Activated CD4-positive, alpha-beta memory T cell treated with anti-CD3 and anti-CD28 coated beads for 36 hours (primary cell): ENCODE measurements at regions of chr18 and their contacts with region 1.

Region 1: GRCh38 chr18:20971886-20972267 is 139.7 kb downstream of the ROCK1 start:
- DNase-seq: no peak
- H3K4me3 Mint-ChIP-seq: no peak overlapping the region
- H3K27ac Mint-ChIP-seq: no peak overlapping the region
- H3K4me1 Mint-ChIP-seq: no peaks in the 10 kb centered on the region
- H3K27me3 Mint-ChIP-seq: no peaks in the 10 kb centered on the region

Region 2: GRCh38 chr18:21038201-21038600 is 66.3 kb after region 1 on chr18:
- CTCF ChIA-PET with region 1: no interaction called
- POLR2A ChIA-PET with region 1: no interaction called
- intact Hi-C with region 1: no loop called
- DNase-seq: no peak
- H3K4me3 Mint-ChIP-seq: no peak overlapping the region
- H3K27ac Mint-ChIP-seq: no peak overlapping the region
- H3K4me1 Mint-ChIP-seq: peaks cover 1% of the 10 kb centered on the region
- H3K27me3 Mint-ChIP-seq: no peaks in the 10 kb centered on the region

Region 3: DNA sequence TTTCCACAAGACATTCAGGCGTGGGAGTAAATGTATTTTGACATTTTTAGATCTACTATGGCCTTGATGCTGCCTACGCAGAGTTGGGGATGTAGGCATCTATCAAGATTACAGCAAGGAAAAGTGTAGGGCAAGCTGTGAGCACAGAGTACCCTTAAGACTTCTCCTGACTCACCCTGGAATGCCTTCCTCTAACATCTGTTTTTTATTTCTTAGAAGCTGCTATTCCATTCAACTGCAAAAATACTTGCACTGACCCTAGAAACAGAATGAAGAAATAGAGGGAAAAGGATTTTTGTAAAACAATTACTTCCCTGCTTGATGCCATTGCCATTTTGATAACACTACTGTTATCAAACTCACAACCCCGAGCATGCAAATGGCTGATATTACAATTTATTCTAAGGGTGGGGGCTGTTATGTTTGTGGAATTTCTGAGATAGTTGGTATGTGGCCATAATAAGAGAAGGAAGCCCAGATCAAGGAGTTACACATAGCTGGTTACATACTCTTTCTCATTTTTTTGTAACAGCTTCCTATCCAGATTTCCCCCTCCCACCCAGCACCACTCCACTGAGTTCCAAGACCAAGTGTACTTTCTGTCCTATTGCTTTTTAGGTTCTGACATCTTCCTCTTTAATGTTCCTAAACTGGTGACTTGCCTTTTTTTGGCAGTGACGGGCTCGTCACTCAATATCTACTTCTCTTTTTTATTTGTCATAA is 145.7 kb after region 1 on chr18:
- CTCF ChIA-PET with region 1: no interaction called
- POLR2A ChIA-PET with region 1: no interaction called
- intact Hi-C with region 1: no loop called
- DNase-seq: no peak
- H3K4me3 Mint-ChIP-seq: no peak overlapping the region
- H3K27ac Mint-ChIP-seq: no peak overlapping the region
- H3K4me1 Mint-ChIP-seq: peaks cover 9% of the 10 kb centered on the region
- H3K27me3 Mint-ChIP-seq: no peaks in the 10 kb centered on the region

Region 4: GRCh38 chr18:21179590-21180220 is 207.8 kb after region 1 on chr18:
- CTCF ChIA-PET with region 1: interaction called, 9 read pairs
- POLR2A ChIA-PET with region 1: no interaction called
- intact Hi-C with region 1: loop called (anchors 1 kb)
- DNase-seq: peak; percentile 50
- H3K4me3 Mint-ChIP-seq: no peak overlapping the region
- H3K27ac Mint-ChIP-seq: no peak overlapping the region
- H3K4me1 Mint-ChIP-seq: peaks cover 6% of the 10 kb centered on the region
- H3K27me3 Mint-ChIP-seq: no peaks in the 10 kb centered on the region

Region 5: DNA sequence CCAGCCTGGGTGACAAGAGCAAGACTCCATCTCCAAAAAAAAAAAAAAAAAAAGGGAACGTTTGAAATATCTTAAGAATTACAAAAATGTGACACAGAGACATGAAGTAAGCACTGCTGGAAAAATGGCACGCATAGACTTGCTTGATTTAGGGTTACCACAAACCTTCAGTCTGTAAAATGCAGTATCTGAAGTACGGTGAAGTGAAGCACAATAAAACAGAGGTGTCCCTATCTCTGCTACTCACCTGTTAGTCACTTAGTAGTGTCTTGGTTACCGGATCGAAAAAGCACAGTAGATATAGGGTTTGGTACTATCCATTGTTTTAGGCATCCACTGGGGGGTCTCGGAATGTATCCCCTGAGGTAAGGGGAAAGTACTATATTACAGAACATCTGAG is 258.6 kb after region 1 on chr18:
- CTCF ChIA-PET with region 1: no interaction called
- POLR2A ChIA-PET with region 1: no interaction called
- intact Hi-C with region 1: no loop called
- DNase-seq: no peak
- H3K4me3 Mint-ChIP-seq: no peak overlapping the region
- H3K27ac Mint-ChIP-seq: no peak overlapping the region
- H3K4me1 Mint-ChIP-seq: no peaks in the 10 kb centered on the region
- H3K27me3 Mint-ChIP-seq: peaks cover 4% of the 10 kb centered on the region

Region 6: DNA sequence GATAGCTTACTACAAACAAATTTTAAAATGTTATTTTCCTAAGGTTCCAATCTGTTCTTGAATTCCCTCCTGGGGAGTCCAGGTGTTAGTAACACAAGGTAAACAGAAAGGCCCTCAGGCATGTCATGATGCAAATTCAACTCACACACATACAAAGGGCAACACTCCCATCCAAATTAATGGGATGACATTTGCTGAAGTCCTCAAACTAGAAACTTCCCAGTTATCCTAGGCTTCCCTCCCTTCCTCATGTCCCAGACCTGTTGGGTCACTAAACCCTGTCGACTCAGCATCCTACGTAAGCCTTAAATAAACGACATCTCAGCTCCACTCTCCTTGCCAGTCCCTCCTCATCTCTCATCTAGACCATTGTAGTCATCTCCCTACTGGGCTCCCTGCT is 355.2 kb after region 1 on chr18:
- CTCF ChIA-PET with region 1: no interaction called
- POLR2A ChIA-PET with region 1: no interaction called
- intact Hi-C with region 1: no loop called
- DNase-seq: no peak
- H3K4me3 Mint-ChIP-seq: no peak overlapping the region
- H3K27ac Mint-ChIP-seq: no peak overlapping the region
- H3K4me1 Mint-ChIP-seq: no peaks in the 10 kb centered on the region
- H3K27me3 Mint-ChIP-seq: no peaks in the 10 kb centered on the region